GM12878 (cell line): ENCODE measurements at regions of chr1 and their contacts with region 1.

Region 1: GRCh38 chr1:89987170-89987819 is 7.6 kb upstream of the ZNF326 start:
- DNase-seq: peak; percentile 45
- ATAC-seq: peak; percentile 94
- H3K4me3 ChIP-seq: no peak overlapping the region
- H3K27ac ChIP-seq: no peak overlapping the region
- H3K4me1 ChIP-seq: no peaks in the 10 kb centered on the region
- H3K27me3 ChIP-seq: no peaks in the 10 kb centered on the region
- CTCF ChIP-seq: peak; percentile 78 to 92 (median 88); a peak in 5 of 6 replicates
- EP300 ChIP-seq: no peak
- POLR2A ChIP-seq: no peak
- RAD21 ChIP-seq: peak; percentile 98

Region 2: GRCh38 chr1:89799495-89799894 is 187.8 kb before region 1 on chr1:
- CTCF ChIA-PET with region 1: interaction called, 71 read pairs
- POLR2A ChIA-PET with region 1: interaction called, 3 read pairs
- RAD21 ChIA-PET with region 1: interaction called, 11 read pairs
- SMC1A ChIA-PET with region 1: interaction called, 30 read pairs
- in situ Hi-C with region 1: loop called (anchors 5 kb)
- intact Hi-C with region 1: loop called (anchors 1 kb)
- DNase-seq: no peak
- ATAC-seq: peak; percentile 24; the same call in 2 of the 3 replicates
- H3K4me3 ChIP-seq: no peak overlapping the region
- H3K27ac ChIP-seq: no peak overlapping the region
- H3K4me1 ChIP-seq: peaks cover 13% of the 10 kb centered on the region
- H3K27me3 ChIP-seq: no peaks in the 10 kb centered on the region
- CTCF ChIP-seq: no peak
- EP300 ChIP-seq: no peak
- POLR2A ChIP-seq: no peak
- RAD21 ChIP-seq: no peak

Region 3: DNA sequence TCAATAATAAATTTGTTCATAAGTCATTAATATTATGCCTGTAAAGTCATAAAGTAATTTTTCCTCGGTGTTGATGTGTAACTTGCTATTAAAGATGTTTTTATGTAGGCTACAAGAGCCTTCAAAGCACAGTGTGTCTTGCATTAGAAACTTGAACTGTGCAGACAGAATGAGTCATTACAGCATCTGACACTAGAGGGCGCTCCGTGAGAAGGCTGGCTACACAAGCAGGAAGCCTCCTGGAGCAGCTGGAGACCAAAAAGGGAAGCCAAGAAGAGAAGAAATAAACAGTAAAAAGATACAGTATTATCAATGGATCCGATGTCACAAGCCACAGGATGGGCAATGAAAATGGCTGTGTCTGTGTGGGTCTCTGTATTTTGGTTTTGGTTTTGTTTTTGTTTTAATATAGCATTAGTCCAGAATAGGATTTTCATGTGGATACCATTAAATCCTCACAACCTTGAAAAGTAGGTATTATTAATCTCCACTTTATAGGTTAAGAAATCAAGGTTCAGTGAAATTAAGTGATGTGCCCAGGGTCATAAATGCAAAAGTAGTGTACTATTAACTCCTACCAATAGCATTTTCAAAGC is 182.6 kb before region 1 on chr1:
- CTCF ChIA-PET with region 1: interaction called, 71 read pairs
- POLR2A ChIA-PET with region 1: interaction called, 3 read pairs
- RAD21 ChIA-PET with region 1: interaction called, 11 read pairs
- SMC1A ChIA-PET with region 1: interaction called, 41 read pairs
- in situ Hi-C with region 1: loop called (anchors 5 kb)
- intact Hi-C with region 1: loop called (anchors 1 kb)
- DNase-seq: peak; percentile 69
- ATAC-seq: peak; percentile 94
- H3K4me3 ChIP-seq: no peak overlapping the region
- H3K27ac ChIP-seq: no peak overlapping the region
- H3K4me1 ChIP-seq: peaks cover 10% of the 10 kb centered on the region
- H3K27me3 ChIP-seq: no peaks in the 10 kb centered on the region; a peak in 1 of 4 replicates
- CTCF ChIP-seq: peak; percentile 86 to 96 (median 88)
- EP300 ChIP-seq: no peak
- POLR2A ChIP-seq: no peak
- RAD21 ChIP-seq: peak; percentile 99

Region 4: GRCh38 chr1:89971600-89971999 is 15.7 kb before region 1 on chr1:
- CTCF ChIA-PET with region 1: interaction called, 11 read pairs
- POLR2A ChIA-PET with region 1: no interaction called
- RAD21 ChIA-PET with region 1: interaction called, 6 read pairs
- SMC1A ChIA-PET with region 1: interaction called, 7 read pairs
- in situ Hi-C with region 1: no loop called
- intact Hi-C with region 1: no loop called
- DNase-seq: no peak
- ATAC-seq: peak; percentile 71
- H3K4me3 ChIP-seq: no peak overlapping the region
- H3K27ac ChIP-seq: no peak overlapping the region
- H3K4me1 ChIP-seq: peaks cover 9% of the 10 kb centered on the region; the same call in 1 of the 2 replicates
- H3K27me3 ChIP-seq: no peaks in the 10 kb centered on the region
- CTCF ChIP-seq: no peak
- EP300 ChIP-seq: no peak
- POLR2A ChIP-seq: no peak
- RAD21 ChIP-seq: no peak